HEK293 (cell line): ENCODE measurements at regions of chr16 and their contacts with region 1.

Region 1: GRCh38 chr16:83215406-83216001 is 588.7 kb downstream of the CDH13 start:
- H3K4me3 ChIP-seq: no peak overlapping the region
- H3K27ac ChIP-seq: no peak overlapping the region
- H3K4me1 ChIP-seq: no peaks in the 10 kb centered on the region
- CTCF ChIP-seq: no peak

Region 2: GRCh38 chr16:83113317-83113716 is 102.2 kb before region 1 on chr16:
- CTCF ChIA-PET with region 1: interaction called, 12 read pairs
- POLR2A ChIA-PET with region 1: no interaction called
- H3K4me3 ChIP-seq: no peak overlapping the region
- H3K27ac ChIP-seq: no peak overlapping the region
- H3K4me1 ChIP-seq: no peaks in the 10 kb centered on the region
- CTCF ChIP-seq: no peak